Ovary (tissue), 10 donors: ENCODE measurements at regions of chr1 and their contacts with region 1.

Region 1: GRCh38 chr1:159261721-159262487 is 40.2 kb upstream of the FCER1A start:
- DNase-seq: no peak
- H3K4me3 ChIP-seq: no peak overlapping the region
- H3K27ac ChIP-seq: no peak overlapping the region
- H3K4me1 ChIP-seq: no peaks in the 10 kb centered on the region
- H3K27me3 ChIP-seq: no peaks in the 10 kb centered on the region
- CTCF ChIP-seq: no peak
- EP300 ChIP-seq: no peak
- POLR2A ChIP-seq: no peak

Region 2: GRCh38 chr1:159214149-159214760 is 47.6 kb before region 1 on chr1:
- intact Hi-C with region 1: no loop called
- DNase-seq: peak in 1 of 5 donors; percentile 23
- H3K4me3 ChIP-seq: no peak overlapping the region
- H3K27ac ChIP-seq: no peak overlapping the region
- H3K4me1 ChIP-seq: no peaks in the 10 kb centered on the region
- H3K27me3 ChIP-seq: no peaks in the 10 kb centered on the region
- CTCF ChIP-seq: peak in 2 of 3 donors; percentile 21 to 40
- EP300 ChIP-seq: no peak
- POLR2A ChIP-seq: no peak

Region 3: GRCh38 chr1:159239551-159240220 is 22.2 kb before region 1 on chr1:
- intact Hi-C with region 1: loop called in 1 of 4 experiments (anchors 2 kb)
- DNase-seq: no peak
- H3K4me3 ChIP-seq: no peak overlapping the region
- H3K27ac ChIP-seq: no peak overlapping the region
- H3K4me1 ChIP-seq: no peaks in the 10 kb centered on the region
- H3K27me3 ChIP-seq: no peaks in the 10 kb centered on the region
- CTCF ChIP-seq: no peak
- EP300 ChIP-seq: no peak
- POLR2A ChIP-seq: no peak